B cell (primary cell): ENCODE measurements at regions of chr4 and their contacts with region 1.

Region 1: DNA sequence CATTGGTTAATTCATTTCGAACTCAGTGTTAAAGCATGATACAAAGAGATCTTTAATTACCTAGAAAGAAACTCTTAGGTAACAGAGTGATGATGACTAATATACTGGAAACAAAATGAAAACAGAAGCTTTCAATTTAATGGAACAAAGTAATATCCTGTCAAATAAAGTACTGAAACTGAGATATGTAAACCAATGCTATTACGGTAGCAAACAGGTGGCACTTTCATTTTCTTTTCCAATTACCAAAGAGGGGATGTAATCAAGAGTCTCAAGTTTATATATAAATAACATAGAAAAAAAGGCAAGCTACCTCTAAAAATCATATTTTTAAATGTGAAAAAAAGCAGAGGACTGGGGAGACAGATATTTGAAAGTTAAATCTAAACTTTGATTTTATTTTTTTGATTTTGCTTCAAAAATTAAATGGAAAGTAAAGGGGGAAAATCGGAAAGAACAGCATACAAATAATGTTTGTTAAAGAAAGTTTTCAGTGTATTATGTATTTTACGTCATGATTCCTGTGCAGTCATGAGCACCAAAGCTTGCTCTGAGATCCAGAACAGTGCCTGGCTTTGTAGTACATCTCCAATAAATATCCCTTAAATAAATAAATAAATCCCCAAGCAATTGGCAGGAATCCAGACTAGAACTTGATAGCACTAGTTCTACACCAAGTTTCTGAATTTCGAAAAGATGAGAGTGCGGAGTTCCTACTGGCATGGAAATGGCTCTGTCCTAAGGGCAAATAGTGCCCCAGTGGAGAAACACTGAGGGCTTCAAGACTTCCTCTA is 25.0 kb upstream of the RAPGEF2 start:
- DNase-seq: peak; percentile 70
- ATAC-seq: peak; percentile 79
- H3K4me3 ChIP-seq: peak overlapping the region in 4 of 5 experiments; percentile 2 to 52 (median 20)
- H3K4me3 Mint-ChIP-seq: peak overlapping the region; percentile 30
- H3K27ac ChIP-seq: peak overlapping the region; percentile 43 to 58
- H3K27ac Mint-ChIP-seq: peak overlapping the region; percentile 63
- H3K4me1 ChIP-seq: peaks cover 13 to 14% of the 10 kb centered on the region in 2 donors
- H3K4me1 Mint-ChIP-seq: peaks cover 13% of the 10 kb centered on the region
- H3K27me3 ChIP-seq: peaks cover 0 to 2% (median 0%) of the 10 kb centered on the region in 4 experiments
- H3K27me3 Mint-ChIP-seq: no peaks in the 10 kb centered on the region
- CTCF ChIP-seq: no peak

Region 2: DNA sequence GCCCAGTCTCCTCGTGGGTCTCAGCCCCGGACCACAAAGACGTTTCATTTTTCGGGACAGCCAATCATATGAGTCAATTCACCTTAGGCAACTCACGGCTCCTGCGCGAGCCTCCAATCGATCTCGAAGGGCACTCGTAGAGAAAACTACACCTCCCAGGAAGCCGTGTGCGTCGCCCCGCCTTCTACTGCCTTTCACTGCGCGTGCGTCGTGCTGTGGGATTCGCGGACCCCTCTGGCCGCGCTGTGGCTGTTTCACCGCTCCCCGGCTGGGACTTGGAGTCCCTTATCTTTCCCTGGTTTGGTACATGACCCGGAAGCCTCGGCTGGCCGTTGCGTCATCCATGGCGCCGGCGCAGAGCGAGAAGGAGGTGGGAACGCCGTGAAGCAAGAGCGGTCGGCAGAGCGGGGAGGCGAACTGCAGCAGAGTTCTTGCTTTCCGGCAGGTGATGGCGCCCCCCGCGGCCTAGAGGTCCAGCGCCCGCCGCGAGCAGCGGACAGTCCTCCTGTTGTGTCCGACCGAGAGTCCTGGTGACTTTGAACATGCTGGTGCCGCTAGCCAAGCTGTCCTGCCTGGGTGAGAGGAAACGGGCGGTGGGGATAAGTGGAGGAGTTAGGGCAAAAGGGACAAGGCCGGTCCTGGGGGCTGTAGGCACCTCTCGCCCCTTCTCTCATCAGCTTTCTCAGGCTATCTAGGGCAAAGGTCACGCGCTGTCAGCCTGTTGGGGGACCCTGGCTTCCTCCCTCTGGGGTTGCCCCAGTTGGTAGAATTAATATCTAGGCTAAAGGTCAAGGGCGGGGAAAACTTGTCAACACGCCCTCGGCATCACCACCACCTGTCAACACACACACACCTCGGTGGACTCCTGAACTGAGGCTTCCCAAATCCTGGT is 405.7 kb before region 1 on chr4 and contains the start of gene ETFDH:
- CTCF ChIA-PET with region 1: no interaction called
- POLR2A ChIA-PET with region 1: no interaction called
- intact Hi-C with region 1: loop called (anchors 10 kb)
- DNase-seq: peak; percentile 100
- ATAC-seq: peak; percentile 80
- H3K4me3 ChIP-seq: peak within 1 kb of the TSS; percentile 73 to 96 (median 77)
- H3K4me3 Mint-ChIP-seq: peak within 1 kb of the TSS; percentile 90
- H3K27ac ChIP-seq: peak within 1 kb of the TSS; percentile 93 to 97
- H3K27ac Mint-ChIP-seq: peak within 1 kb of the TSS; percentile 95
- H3K4me1 ChIP-seq: peaks cover 12 to 13% of the 10 kb centered on the region in 2 donors
- H3K4me1 Mint-ChIP-seq: peaks cover 22% of the 10 kb centered on the region
- H3K27me3 ChIP-seq: no peaks in the 10 kb centered on the region
- H3K27me3 Mint-ChIP-seq: no peaks in the 10 kb centered on the region
- CTCF ChIP-seq: peak; percentile 68
- total RNA-seq, gene ETFDH: 8.8 and 10.8 TPM in 2 replicates

Region 3: GRCh38 chr4:158966091-158966490 is 111.8 kb before region 1 on chr4:
- CTCF ChIA-PET with region 1: no interaction called
- POLR2A ChIA-PET with region 1: no interaction called
- intact Hi-C with region 1: no loop called
- DNase-seq: no peak
- ATAC-seq: no peak
- H3K4me3 ChIP-seq: no peak overlapping the region
- H3K4me3 Mint-ChIP-seq: no peak overlapping the region
- H3K27ac ChIP-seq: no peak overlapping the region
- H3K27ac Mint-ChIP-seq: no peak overlapping the region
- H3K4me1 ChIP-seq: no peaks in the 10 kb centered on the region
- H3K4me1 Mint-ChIP-seq: no peaks in the 10 kb centered on the region
- H3K27me3 ChIP-seq: no peaks in the 10 kb centered on the region
- H3K27me3 Mint-ChIP-seq: peaks cover 15% of the 10 kb centered on the region
- CTCF ChIP-seq: no peak

Region 4: GRCh38 chr4:159051245-159052071 is 26.4 kb before region 1 on chr4:
- CTCF ChIA-PET with region 1: no interaction called
- POLR2A ChIA-PET with region 1: no interaction called
- intact Hi-C with region 1: loop called (anchors 1 kb)
- DNase-seq: peak; percentile 32
- ATAC-seq: peak; percentile 35
- H3K4me3 ChIP-seq: peak overlapping the region in 2 of 5 experiments; percentile 1 to 40
- H3K4me3 Mint-ChIP-seq: peak overlapping the region; percentile 74
- H3K27ac ChIP-seq: no peak overlapping the region
- H3K27ac Mint-ChIP-seq: peak overlapping the region; percentile 10
- H3K4me1 ChIP-seq: peaks cover 16% of the 10 kb centered on the region in 2 donors
- H3K4me1 Mint-ChIP-seq: peaks cover 17% of the 10 kb centered on the region
- H3K27me3 ChIP-seq: peaks cover 0 to 24% (median 16%) of the 10 kb centered on the region in 4 experiments
- H3K27me3 Mint-ChIP-seq: peaks cover 57% of the 10 kb centered on the region
- CTCF ChIP-seq: no peak